BJ (cell line): ENCODE measurements at regions of chr1 and their contacts with region 1.

Region 1: GRCh38 chr1:225318706-225319575 is 108.9 kb downstream of the LBR start:
- DNase-seq: no peak
- H3K4me3 ChIP-seq: no peak overlapping the region
- H3K27me3 ChIP-seq: no peaks in the 10 kb centered on the region; the same call in 1 of the 2 replicates
- CTCF ChIP-seq: peak; percentile 83

Region 2: GRCh38 chr1:225004396-225004795 is 314.5 kb before region 1 on chr1:
- CTCF ChIA-PET with region 1: no interaction called
- POLR2A ChIA-PET with region 1: no interaction called
- DNase-seq: no peak
- H3K4me3 ChIP-seq: no peak overlapping the region
- H3K27me3 ChIP-seq: no peaks in the 10 kb centered on the region
- CTCF ChIP-seq: peak; percentile 22; the same call in 1 of the 2 replicates

Region 3: DNA sequence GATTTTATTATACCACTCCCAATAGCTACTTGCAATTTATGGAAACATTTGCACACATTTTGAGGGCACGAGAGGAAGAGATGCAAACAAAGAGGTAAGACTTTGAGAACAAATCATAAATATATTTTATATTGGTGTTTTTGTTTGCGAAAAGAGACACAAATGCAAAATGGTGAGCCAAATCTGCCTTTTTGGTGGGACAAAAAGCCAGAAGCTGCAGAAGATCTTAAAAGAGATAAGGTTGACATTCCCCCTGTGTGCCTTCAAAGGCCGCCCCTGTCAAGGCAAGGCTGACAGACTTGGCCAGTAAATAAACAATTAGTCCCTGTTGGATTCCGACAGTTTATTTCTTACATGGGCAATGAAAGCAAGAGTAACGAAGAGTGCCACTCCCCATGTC is 13.9 kb before region 1 on chr1:
- CTCF ChIA-PET with region 1: interaction called, 10 read pairs
- POLR2A ChIA-PET with region 1: no interaction called
- DNase-seq: no peak
- H3K4me3 ChIP-seq: no peak overlapping the region
- H3K27me3 ChIP-seq: no peaks in the 10 kb centered on the region
- CTCF ChIP-seq: no peak

Region 4: DNA sequence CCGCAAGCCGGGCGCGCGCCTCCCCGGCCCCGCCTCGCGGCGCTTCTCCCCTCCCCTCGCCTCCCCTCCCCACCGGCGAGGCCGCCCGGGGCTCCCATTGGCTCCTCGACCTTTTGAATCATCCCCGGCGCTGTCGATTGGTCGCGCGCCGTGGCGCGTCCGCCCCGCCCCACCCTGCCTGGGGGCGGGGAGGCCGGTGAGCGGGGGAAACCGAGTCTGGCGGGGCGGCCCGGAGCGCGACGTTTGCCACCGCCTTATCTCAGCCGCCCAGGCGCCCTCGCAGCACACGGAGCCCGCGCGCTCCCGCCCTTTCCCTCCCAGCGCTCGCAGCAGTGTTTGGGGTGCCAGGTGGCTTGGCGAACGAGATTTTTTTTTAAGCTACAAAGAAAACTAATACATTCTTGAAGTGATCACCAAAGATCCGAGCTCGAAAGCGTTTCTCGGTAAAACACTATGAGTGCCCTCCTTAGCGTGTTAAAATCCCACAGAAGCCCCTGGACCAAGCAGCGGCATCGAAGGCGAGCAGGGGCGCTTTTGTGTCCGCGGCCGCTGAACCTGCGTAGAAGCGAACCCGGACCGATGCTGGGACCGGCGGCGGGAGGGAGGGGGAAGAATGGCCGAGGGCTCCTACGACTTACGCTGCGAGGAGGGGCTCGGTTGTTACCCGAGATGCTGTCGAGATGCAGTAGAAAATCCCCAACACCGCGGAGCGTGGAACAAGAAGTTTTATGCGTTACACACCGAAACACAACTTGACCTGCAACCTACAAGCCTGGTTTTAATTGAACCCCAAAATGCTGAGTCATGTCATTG is 109.3 kb after region 1 on chr1:
- CTCF ChIA-PET with region 1: no interaction called
- POLR2A ChIA-PET with region 1: no interaction called
- DNase-seq: peak; percentile 37
- H3K4me3 ChIP-seq: peak overlapping the region; percentile 81
- H3K27me3 ChIP-seq: no peaks in the 10 kb centered on the region
- CTCF ChIP-seq: no peak

Region 5: DNA sequence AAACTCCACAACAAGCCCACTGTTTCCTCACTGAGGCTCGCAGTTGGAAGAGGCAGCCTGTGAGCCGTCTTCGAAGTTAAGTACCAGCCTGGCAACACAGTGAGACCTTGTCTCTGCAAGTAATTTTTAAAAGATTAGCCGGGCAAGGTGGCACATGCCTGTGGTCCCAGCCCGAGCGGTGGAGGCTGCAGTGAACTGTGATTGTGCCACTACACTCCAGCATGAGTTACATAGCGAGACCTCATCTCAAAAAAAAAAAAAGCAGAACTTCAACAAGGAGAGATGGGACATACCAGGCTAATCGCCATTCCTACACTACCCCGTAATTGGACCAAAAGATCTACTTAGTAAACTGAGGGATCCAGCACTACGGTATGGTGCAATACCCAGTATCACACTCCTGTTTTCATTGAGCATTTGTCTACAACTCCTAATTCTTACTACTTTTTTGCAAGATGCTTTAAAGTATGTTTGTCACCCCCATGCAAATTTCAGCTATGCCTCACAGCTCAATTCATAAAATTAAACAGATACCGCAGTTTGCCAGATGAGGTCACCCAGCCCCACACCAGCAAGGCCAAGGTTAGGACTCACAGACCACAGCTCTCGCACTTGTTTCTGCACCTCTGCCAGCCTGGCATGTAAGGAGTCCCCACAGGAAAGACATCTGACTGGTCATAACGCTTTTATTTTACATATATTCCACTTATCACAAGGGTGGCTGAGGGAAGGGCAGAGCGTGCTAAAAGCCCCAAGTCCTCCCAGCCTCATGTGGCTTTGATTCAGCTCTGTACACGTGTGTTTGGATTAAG is 659.2 kb after region 1 on chr1:
- CTCF ChIA-PET with region 1: interaction called, 15 read pairs
- POLR2A ChIA-PET with region 1: no interaction called
- DNase-seq: no peak
- H3K4me3 ChIP-seq: no peak overlapping the region
- H3K27me3 ChIP-seq: no peaks in the 10 kb centered on the region
- CTCF ChIP-seq: no peak

Region 6: GRCh38 chr1:225987491-225988316 is 668.8 kb after region 1 on chr1:
- CTCF ChIA-PET with region 1: interaction called, 17 read pairs
- POLR2A ChIA-PET with region 1: no interaction called
- DNase-seq: no peak
- H3K4me3 ChIP-seq: no peak overlapping the region
- H3K27me3 ChIP-seq: no peaks in the 10 kb centered on the region
- CTCF ChIP-seq: peak; percentile 68